CD8-positive, alpha-beta T cell (primary cell): ENCODE measurements at regions of chr4 and their contacts with region 1.

Region 1: GRCh38 chr4:73213916-73214653 is 44.5 kb downstream of the ANKRD17 start:
- DNase-seq: no peak
- ATAC-seq: no peak
- H3K4me3 ChIP-seq: no peak overlapping the region
- H3K4me3 Mint-ChIP-seq: no peak overlapping the region
- H3K27ac ChIP-seq: no peak overlapping the region
- H3K27ac Mint-ChIP-seq: no peak overlapping the region
- H3K4me1 ChIP-seq: no peaks in the 10 kb centered on the region
- H3K4me1 Mint-ChIP-seq: peaks cover 52% of the 10 kb centered on the region
- H3K27me3 ChIP-seq: no peaks in the 10 kb centered on the region
- H3K27me3 Mint-ChIP-seq: no peaks in the 10 kb centered on the region
- CTCF ChIP-seq: no peak

Region 2: DNA sequence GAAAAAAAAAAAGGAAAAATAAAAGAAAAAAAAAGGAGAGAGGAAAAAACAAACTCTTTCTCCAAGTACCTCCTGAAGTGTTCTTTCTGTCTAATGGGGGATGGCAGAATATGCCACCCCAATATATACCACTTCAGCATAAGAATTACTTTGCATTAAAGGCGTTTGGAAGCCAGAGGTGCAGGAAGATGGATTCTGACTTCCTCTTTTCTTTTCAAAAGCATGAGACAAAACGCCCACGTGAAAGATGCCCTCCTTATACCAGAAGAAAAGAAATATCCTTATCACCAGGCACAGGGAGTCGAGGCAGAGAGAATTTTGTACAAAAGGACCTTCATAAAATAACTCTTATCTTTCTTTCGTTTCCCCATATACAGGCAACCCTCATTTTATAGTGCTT is 185.5 kb before region 1 on chr4:
- CTCF ChIA-PET with region 1: no interaction called
- POLR2A ChIA-PET with region 1: no interaction called
- intact Hi-C with region 1: no loop called
- DNase-seq: no peak
- ATAC-seq: no peak
- H3K4me3 ChIP-seq: no peak overlapping the region
- H3K4me3 Mint-ChIP-seq: no peak overlapping the region
- H3K27ac ChIP-seq: no peak overlapping the region
- H3K27ac Mint-ChIP-seq: no peak overlapping the region
- H3K4me1 ChIP-seq: no peaks in the 10 kb centered on the region
- H3K4me1 Mint-ChIP-seq: no peaks in the 10 kb centered on the region
- H3K27me3 ChIP-seq: no peaks in the 10 kb centered on the region
- H3K27me3 Mint-ChIP-seq: no peaks in the 10 kb centered on the region
- CTCF ChIP-seq: no peak

Region 3: DNA sequence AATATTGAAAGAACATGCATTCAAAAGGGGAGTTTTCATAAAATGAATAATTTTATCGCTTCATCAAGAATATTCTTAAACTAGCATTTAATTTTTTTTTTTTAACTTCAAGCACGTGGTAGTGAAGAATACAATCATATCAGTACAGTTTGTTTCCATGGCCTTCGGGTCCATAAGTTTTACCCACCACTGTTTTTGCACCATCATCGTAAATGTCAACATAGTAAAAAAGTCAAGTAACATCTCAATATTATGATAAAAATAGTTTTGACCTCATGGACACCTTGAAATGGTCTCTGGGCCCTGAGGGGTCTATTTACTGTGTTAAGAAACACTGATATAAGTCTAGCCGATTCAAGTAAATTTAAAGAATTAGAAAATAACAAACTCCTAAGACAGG is 35.7 kb before region 1 on chr4:
- CTCF ChIA-PET with region 1: interaction called, 3 read pairs
- POLR2A ChIA-PET with region 1: no interaction called
- intact Hi-C with region 1: loop called in 1 of 2 experiments (anchors 5 kb)
- DNase-seq: no peak
- ATAC-seq: no peak
- H3K4me3 ChIP-seq: no peak overlapping the region
- H3K4me3 Mint-ChIP-seq: no peak overlapping the region
- H3K27ac ChIP-seq: no peak overlapping the region
- H3K27ac Mint-ChIP-seq: no peak overlapping the region
- H3K4me1 ChIP-seq: peaks cover 3% of the 10 kb centered on the region
- H3K4me1 Mint-ChIP-seq: peaks cover 56% of the 10 kb centered on the region
- H3K27me3 ChIP-seq: no peaks in the 10 kb centered on the region
- H3K27me3 Mint-ChIP-seq: no peaks in the 10 kb centered on the region
- CTCF ChIP-seq: no peak

Region 4: DNA sequence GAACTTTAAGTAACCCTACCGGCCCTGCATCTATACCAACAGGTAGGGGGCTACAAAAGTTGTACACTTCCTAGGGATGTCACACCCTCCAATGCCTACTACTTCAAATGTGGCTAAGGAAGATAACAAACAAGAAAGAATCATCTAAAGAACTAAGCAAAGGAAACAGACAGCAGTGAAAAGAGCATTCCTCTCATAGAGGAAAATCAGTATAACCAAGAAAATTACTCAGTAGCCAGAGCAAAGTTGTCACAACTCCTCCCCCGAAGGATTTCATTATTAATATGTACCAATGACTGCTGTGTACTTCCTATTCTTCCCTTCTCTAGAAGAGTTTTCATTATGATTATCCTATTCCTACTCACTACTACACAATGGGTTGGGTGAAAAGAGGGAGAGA is 31.9 kb after region 1 on chr4:
- CTCF ChIA-PET with region 1: no interaction called
- POLR2A ChIA-PET with region 1: no interaction called
- intact Hi-C with region 1: loop called in 1 of 2 experiments (anchors 5 kb)
- DNase-seq: no peak
- ATAC-seq: no peak
- H3K4me3 ChIP-seq: no peak overlapping the region
- H3K4me3 Mint-ChIP-seq: no peak overlapping the region
- H3K27ac ChIP-seq: no peak overlapping the region
- H3K27ac Mint-ChIP-seq: peak overlapping the region; percentile 15
- H3K4me1 ChIP-seq: peaks cover 48% of the 10 kb centered on the region
- H3K4me1 Mint-ChIP-seq: peaks cover 72% of the 10 kb centered on the region
- H3K27me3 ChIP-seq: no peaks in the 10 kb centered on the region
- H3K27me3 Mint-ChIP-seq: no peaks in the 10 kb centered on the region
- CTCF ChIP-seq: no peak

Region 5: DNA sequence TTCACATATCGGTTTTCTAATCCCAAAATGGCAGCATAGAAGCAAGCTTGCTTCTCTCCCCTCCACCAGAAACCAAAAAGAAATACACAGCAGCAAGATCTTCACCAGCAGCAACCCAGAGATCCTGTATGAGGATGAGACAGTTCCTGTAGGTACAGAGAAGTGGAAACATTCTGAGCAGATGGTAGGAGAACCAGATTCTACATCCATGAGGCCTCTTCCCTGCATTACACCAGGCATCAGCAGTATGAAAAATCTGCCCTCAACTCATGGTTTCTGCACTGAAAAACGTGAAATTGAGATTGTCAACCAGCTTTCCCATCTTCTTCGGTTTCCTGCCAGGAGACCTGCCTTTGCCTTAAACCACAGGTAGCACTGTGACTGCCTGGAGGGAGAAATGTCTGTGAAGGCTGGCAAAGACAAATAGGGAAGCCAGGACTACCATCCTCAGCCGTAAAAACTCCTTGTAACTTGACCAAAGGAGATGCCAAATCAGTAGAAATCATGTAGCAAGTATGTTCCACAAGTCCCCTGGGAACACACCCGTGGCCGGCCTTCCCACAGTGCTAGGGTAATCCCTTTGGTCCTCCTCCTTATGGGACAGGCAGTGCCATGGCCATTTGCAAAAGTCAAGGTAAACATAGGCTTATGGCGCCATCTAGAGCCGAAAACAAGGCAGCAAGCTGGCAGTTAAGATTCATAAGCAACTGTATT is 919.9 kb after region 1 on chr4:
- CTCF ChIA-PET with region 1: no interaction called
- POLR2A ChIA-PET with region 1: no interaction called
- intact Hi-C with region 1: no loop called
- DNase-seq: peak in 6 of 9 experiments; percentile 16 to 62 (median 42)
- ATAC-seq: no peak
- H3K4me3 ChIP-seq: no peak overlapping the region
- H3K4me3 Mint-ChIP-seq: no peak overlapping the region
- H3K27ac ChIP-seq: no peak overlapping the region
- H3K27ac Mint-ChIP-seq: no peak overlapping the region
- H3K4me1 ChIP-seq: no peaks in the 10 kb centered on the region
- H3K4me1 Mint-ChIP-seq: no peaks in the 10 kb centered on the region
- H3K27me3 ChIP-seq: no peaks in the 10 kb centered on the region
- H3K27me3 Mint-ChIP-seq: peaks cover 2% of the 10 kb centered on the region
- CTCF ChIP-seq: peak; percentile 54